ENCODE measurements at regions of chr17 and their contacts with region 1.

Region 1: GRCh38 chr17:64622931-64623654 is 39.0 kb downstream of the SMURF2 start:
- DNase-seq: peak; percentile 79
- H3K4me3 Mint-ChIP-seq: peak overlapping the region; percentile 49
- H3K27ac Mint-ChIP-seq: peak overlapping the region; percentile 73
- H3K4me1 Mint-ChIP-seq: peaks cover 26% of the 10 kb centered on the region
- H3K27me3 Mint-ChIP-seq: no peaks in the 10 kb centered on the region
- CTCF ChIP-seq: no peak

Region 2: DNA sequence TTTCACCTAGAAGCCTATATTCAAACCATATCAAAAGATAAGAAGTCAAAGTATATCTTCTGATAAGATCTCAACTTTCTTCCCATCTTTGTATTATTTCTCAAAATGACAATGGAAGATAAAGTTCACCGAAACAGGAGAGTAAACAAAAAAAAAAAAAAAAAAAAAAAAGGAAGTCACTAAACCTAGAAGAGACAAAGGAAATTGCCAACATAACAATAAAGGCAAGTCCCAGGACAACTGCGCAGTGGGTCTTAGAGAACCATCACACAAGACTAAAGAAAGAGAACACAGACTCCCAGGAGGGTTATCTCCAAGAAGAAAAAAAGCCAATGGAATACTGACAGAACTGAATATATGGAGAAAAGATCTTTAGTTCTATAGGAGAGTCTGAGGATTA is 26.7 kb before region 1 on chr17:
- CTCF ChIA-PET with region 1: no interaction called
- POLR2A ChIA-PET with region 1: no interaction called
- intact Hi-C with region 1: no loop called
- DNase-seq: no peak
- H3K4me3 Mint-ChIP-seq: no peak overlapping the region
- H3K27ac Mint-ChIP-seq: no peak overlapping the region
- H3K4me1 Mint-ChIP-seq: peaks cover 6% of the 10 kb centered on the region
- H3K27me3 Mint-ChIP-seq: no peaks in the 10 kb centered on the region
- CTCF ChIP-seq: no peak

Region 3: DNA sequence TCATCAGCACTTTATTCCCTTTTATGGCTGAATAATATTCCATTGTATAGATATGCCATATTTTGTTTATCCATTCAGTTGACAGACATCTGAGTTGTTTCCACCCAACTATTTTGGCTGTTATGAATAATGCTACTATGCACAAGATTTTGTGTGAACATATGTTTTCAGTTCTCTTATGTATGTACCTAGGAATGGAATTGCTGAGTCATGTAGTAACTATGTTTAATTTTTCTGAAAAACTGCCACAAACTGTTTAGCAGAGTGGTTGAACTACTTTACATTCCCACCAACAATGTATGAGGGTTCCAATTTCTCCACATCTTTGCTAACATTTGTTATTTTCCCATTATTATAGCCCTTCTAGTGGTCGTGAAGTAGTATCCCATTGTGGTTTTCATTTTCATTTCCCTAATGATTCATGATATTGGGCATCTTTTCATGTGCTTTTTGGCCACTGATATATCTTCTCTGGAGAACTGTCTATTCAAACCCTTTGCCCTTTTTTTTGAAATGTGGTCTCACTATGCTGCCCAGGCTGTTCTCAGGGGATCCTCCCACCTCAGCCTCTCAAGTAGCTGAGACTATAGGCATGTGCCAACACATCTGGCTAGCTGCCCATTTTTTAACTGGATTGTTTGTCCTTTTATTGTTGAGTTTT is 12.7 kb after region 1 on chr17:
- CTCF ChIA-PET with region 1: interaction called, 5 read pairs
- POLR2A ChIA-PET with region 1: interaction called, 11 read pairs
- intact Hi-C with region 1: no loop called
- DNase-seq: peak; percentile 54
- H3K4me3 Mint-ChIP-seq: peak overlapping the region; percentile 33
- H3K27ac Mint-ChIP-seq: peak overlapping the region; percentile 80
- H3K4me1 Mint-ChIP-seq: peaks cover 28% of the 10 kb centered on the region
- H3K27me3 Mint-ChIP-seq: no peaks in the 10 kb centered on the region
- CTCF ChIP-seq: no peak

Measured in MCF 10A (cell line).